Motor neuron (in vitro differentiated cells): ENCODE measurements at regions of chr20 and their contacts with region 1.

Region 1: DNA sequence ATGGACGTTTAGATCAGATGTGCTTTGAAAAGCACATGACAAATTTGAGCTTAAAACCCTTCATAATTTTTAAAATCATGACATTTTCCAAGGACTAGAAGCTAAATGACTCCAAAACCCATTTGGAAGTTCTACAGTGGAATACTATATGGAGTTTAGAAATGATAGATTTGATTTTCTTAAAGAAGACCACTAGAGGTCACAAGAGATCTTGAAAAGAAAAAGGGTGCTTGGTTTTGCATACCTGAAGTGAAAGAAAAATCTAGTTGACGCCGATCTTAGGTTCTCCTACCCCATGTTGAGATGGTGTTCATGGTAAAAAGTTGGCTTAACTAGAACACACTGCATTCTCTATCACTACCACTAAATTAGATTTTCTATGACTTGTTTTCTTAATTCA is 31.5 kb downstream of the CFAP61 start:
- ATAC-seq: peak; percentile 41 to 85 (median 62)
- H3K4me3 ChIP-seq: no peak overlapping the region
- H3K27ac ChIP-seq: no peak overlapping the region
- H3K4me1 ChIP-seq: peaks cover 6 to 12% of the 10 kb centered on the region in 2 donors

Region 2: DNA sequence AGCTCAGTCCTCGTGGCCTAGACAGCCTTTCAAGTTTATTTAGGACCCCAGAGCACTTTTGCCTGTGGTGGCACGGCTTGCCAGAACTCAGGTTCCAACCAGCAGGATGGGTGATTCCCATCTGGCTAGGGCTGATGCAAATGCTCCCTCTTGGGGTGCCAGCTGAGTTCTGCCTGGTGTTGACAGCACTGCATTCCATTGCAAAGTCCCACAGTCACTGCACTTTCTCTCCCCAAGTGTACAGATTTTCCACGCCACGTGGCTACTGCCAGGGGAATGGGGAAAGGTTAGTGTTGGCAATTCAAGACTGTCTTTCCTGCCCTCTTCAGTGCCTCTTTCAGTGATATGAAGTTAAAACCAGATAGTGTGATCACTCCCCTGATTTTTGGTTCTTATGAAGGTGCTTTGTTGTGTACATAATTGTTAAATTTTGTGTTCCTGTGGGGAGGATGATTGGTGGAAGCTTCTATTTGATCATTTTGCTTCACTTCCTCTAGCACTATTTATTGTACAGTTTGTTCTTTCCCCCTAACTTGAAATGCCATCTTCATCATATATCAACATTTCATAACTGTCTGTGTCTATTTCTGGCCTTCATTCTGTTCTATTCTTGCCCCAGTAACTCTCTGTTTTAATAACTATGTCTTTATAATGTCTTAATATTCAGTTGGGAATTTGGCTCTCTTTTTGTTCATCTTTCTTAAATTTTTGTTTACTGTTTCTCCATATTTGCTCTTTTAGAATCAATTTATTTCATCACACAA is 54.7 kb after region 1 on chr20:
- in situ Hi-C with region 1: no loop called
- ATAC-seq: no peak
- H3K4me3 ChIP-seq: no peak overlapping the region
- H3K27ac ChIP-seq: no peak overlapping the region
- H3K4me1 ChIP-seq: no peaks in the 10 kb centered on the region

Region 3: DNA sequence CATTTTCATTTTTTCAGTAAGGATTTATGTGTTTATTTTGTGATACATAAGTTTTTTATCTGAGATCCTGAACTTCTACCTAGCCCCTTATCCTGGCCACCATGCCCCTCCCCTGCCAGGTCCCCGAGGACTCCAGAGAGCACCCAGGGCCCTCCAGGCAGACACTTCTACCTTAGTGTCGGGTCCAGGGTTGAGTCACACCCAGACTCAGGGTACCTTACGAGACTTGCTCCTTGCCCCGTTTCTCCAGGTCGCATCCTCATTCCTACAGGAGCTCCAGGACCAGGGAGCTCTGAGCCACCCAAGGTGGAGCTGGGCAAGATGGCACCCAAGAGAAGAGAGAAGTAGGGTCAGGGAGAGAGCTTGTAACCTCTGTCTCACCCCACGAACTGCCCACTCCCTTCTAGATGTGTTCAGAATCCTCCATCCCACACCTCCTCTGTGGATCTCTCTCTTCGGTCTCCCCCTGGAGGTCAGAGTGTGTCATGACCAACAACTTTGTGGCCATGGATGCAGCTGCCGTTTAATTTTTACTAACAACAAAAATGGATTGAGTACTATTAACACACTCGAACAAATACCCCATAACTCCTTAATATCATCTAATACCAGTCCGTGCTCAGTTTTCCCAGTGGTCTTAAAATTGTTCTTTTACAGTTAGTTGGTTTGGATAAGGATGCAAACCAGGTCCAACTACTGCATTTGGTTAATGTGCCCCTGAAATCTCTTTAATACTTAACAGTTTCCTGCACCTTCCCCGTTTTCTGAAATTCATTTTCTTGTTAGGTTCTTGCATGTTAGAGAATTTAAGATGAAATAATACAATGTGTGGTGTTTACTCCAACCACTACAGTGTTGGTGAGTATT is 153.5 kb after region 1 on chr20:
- in situ Hi-C with region 1: loop called in 3 of 9 experiments (anchors 25 kb)
- ATAC-seq: peak; percentile 51 to 86 (median 73)
- H3K4me3 ChIP-seq: no peak overlapping the region
- H3K27ac ChIP-seq: no peak overlapping the region
- H3K4me1 ChIP-seq: no peaks in the 10 kb centered on the region

Region 4: DNA sequence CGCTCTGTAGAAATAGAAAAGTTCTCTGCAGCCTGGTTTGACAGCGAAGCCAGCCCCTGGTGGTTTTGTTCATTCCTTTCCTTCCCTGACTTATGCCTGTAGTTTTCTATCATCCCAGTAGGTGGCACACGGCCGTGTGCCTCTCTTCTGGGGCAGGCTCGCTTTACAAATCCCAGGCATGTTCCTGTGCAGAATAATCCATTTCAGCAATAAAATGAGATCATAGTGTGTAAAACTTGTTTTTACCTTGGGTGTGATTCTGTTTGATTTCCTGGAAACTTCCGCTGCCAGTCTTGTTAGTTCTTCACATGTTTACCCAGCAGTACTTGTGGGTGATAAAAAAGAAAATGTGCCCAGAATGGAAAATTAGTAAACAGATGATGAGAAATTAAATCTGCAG is 276.7 kb after region 1 on chr20:
- in situ Hi-C with region 1: loop called in 1 of 9 experiments (anchors 25 kb)
- ATAC-seq: peak in 7 of 8 experiments; percentile 14 to 92 (median 41)
- H3K4me3 ChIP-seq: no peak overlapping the region
- H3K27ac ChIP-seq: no peak overlapping the region
- H3K4me1 ChIP-seq: peaks cover 10 to 14% of the 10 kb centered on the region in 2 donors

Region 5: DNA sequence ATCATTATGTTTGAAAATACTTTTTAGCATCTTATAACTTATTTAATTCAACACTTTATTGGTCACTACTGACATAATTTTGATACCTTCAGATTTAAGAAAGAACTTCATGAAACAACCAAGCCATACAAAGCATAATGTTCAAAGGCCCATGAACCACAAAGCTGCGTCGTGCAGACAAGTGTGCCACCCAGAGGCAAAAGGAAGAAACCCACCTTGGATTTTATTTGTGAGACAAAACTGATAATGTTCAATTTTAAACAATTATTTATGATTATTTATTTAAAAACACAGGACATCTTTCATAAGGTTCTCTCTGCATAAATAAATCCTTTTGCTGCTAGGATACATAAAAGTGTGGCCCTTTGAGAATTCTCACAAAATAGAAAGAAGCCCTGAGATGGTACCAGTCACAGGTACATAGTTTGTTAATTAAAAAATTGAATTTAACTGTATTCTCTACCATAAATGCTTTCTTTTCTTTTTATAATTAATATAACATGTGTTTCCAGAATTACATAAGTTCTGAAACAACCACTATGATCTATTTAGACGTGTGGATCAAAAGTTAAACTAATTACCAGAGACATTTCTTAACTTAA is 484.9 kb after region 1 on chr20:
- in situ Hi-C with region 1: loop called in 3 of 9 experiments (anchors 25 kb)
- ATAC-seq: peak in 2 of 8 experiments; percentile 35 to 45
- H3K4me3 ChIP-seq: no peak overlapping the region
- H3K27ac ChIP-seq: no peak overlapping the region
- H3K4me1 ChIP-seq: no peaks in the 10 kb centered on the region

Region 6: DNA sequence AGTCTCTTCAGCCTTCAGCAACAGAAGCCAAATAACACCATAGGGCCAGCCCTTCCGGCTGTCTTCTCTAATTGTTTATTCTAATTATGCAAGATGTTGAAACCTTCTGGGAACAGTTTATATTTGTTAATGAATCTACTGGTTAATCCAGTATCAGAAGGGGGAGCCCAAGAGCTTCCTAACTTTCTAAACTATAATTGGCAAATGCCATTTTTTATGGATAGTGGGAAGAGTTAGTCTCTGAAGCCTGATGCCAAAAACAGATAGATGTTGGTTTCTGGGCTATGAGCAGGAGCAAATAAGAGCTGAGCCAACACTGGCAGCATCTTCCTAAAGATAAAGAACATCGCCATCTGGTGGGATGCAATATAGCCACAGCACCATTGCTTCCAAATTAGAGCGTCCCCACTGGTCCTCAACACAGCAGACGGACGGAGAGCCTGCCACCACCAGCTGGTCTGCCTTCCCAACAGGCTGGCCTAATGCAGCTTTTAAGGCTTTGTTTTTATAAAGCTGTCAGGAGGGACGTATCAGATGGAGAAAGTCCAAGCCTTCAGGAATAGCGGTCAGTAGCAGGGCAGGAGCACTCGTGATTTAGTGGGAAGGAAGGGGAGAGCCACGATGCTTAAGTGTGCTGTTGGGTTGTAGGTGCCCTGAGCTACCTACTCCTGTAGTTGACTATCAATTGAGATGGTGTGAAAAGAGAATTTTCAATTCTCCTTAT is 509.8 kb after region 1 on chr20:
- in situ Hi-C with region 1: loop called in 2 of 9 experiments (anchors 25 kb)
- ATAC-seq: peak; percentile 66 to 93 (median 84)
- H3K4me3 ChIP-seq: no peak overlapping the region
- H3K27ac ChIP-seq: no peak overlapping the region
- H3K4me1 ChIP-seq: no peaks in the 10 kb centered on the region